Left cardiac atrium (tissue), 4 donors: ENCODE measurements at regions of chr4 and their contacts with region 1.

Region 1: DNA sequence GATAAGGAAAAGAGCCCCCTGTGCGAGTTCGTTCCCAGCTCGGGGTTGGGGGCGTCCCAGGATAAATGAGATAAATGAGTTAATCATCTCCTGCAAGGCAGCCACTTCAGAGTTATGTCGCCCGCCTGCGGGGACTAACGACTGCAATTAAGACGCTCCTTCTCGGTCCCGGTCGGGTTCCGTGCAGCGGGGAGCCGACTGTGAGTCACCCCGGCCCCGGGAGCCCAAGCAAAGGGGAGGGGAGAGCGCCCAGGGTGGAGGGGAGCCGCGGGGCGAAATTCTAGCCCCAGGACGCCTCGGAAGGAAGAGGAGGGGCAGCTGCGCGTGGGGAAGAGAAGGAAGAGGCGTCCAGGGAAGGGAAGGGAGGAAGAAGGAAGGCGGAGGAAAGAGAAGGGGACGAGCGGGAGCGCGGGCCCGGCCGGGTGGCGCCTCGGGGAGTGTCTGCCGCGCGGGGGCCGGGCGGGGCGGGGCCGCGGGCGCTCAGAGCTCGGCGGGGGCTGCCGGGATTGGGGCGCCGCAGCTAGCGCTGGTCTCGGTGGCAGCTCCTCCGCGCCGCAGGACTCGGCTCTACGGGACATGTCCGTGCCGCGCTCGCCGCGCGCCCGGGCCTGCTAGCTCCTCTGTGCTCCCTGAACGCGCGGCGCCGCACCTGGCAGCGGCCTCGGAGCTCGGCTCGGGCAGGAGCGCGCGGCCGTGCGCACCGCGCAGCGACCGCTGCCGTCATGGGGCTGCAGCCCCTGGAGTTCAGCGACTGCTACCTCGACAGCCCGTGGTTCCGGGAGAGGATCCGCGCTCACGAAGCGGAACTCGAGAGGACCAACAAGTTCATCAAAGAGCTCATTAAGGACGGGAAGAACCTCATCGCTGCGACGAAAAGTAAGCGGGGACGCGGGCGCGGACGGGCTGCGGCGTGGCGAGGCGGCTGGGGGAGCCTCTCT is at the start of gene ARHGAP10:
- DNase-seq: peak; percentile 81
- ATAC-seq: peak; percentile 88 to 91
- total RNA-seq, gene ARHGAP10: 41.4 to 46.5 TPM

Region 2: DNA sequence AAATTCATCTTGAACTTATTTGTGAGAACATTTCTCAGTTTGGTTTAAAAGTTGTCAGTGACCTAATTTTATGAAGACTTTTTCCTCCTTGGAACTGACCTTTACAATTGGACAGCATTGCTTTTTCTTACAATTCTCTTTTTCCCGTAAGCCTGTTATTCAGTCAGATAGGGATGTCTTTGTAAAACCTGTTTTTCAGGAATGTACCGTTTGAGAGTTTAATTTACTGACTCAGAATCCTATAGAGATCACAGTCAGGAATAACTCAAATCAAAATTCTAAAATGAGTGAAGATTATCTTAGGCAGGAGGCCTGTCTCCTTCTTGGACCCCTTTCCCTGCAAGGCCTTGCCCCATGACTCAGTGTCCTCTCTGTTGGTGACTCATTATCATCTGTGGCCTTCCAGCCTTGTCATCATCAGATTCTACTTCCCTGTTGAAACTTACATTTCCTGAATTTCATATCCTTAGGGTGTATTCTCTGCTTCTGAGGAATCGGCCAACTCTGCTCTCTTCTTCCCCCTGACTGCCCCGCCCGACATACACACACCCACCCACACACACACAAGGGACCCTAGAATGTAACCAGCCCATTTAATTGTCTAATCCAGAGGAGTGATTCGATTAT is 99.8 kb after region 1 on chr4:
- intact Hi-C with region 1: loop called in 1 of 2 experiments (anchors 10 kb)
- DNase-seq: peak; percentile 46
- ATAC-seq: peak; percentile 38 to 84

Region 3: DNA sequence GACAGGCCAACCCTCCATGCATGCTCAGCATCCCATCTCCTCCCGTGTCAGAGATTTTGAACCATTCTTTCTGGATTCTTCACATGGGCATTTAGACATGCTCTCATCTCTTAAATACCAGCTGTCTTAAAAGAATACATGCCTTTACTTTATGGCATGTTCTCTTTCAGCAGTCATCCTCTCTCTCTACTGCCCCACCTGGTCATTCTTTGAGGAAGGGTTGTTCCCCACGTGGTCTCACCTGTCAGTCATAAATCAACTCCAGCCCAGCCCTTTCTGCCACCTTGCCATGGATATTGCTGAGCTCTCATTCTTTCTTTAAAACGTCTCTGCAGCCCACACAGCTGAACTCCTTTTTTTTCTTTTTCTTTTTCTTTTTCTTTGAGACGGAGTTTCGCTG is 111.3 kb after region 1 on chr4:
- intact Hi-C with region 1: loop called (anchors 5 to 10 kb)
- DNase-seq: no peak
- ATAC-seq: peak in 1 of 2 donors; percentile 14

Region 4: DNA sequence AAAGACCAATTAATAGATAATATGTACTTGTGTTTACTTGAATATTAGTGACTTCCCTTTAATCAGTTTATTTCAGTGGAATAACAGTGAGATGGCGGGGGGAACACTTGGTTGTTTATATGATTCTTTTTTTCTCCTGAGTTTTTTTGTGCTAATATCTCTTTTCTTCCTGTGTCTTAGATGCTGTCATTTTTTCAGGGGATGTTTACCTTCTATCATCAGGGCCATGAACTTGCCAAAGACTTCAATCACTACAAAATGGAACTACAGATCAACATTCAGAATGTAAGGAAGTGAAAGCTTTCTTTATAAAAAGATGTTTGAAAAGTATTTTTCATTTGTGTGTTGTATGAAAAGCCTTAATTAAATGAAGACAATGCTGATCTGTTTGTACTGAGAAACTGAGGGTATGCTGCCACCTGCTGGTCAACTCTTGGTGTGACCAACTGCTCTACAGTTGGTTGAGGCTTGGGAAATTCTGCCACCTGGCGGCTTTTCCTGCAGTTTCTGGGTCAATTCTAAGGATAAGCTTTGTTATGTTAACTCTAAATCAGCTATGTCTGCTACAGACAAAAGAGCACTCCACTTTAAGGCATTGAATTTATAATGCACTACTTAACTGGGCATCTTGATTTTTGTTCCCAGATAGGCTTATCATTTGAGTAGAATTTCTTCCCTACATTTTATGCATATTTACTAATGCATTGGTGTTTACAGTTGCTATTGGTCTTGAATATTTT is 134.9 kb after region 1 on chr4:
- intact Hi-C with region 1: loop called in 1 of 2 experiments (anchors 5 kb)
- DNase-seq: peak; percentile 93
- ATAC-seq: peak; percentile 90 to 91